ENCODE measurements at regions of chr16 and their contacts with region 1.

Region 1: GRCh38 chr16:70523076-70523742 is at the start of gene COG4:
- DNase-seq: peak; percentile 96
- ATAC-seq: peak; percentile 79
- H3K4me3 Mint-ChIP-seq: peak within 1 kb of the TSS; percentile 96
- H3K27ac Mint-ChIP-seq: peak within 1 kb of the TSS; percentile 98
- H3K4me1 Mint-ChIP-seq: peaks cover 46% of the 10 kb centered on the region
- H3K27me3 Mint-ChIP-seq: no peaks in the 10 kb centered on the region
- total RNA-seq, gene COG4: 33.5 to 37.6 TPM

Region 2: GRCh38 chr16:69371564-69371963 is 1151.6 kb before region 1 on chr16:
- CTCF ChIA-PET with region 1: no interaction called
- POLR2A ChIA-PET with region 1: no interaction called
- intact Hi-C with region 1: no loop called
- DNase-seq: no peak
- ATAC-seq: no peak
- H3K4me3 Mint-ChIP-seq: no peak overlapping the region
- H3K27ac Mint-ChIP-seq: no peak overlapping the region
- H3K4me1 Mint-ChIP-seq: peaks cover 12% of the 10 kb centered on the region
- H3K27me3 Mint-ChIP-seq: no peaks in the 10 kb centered on the region

Region 3: DNA sequence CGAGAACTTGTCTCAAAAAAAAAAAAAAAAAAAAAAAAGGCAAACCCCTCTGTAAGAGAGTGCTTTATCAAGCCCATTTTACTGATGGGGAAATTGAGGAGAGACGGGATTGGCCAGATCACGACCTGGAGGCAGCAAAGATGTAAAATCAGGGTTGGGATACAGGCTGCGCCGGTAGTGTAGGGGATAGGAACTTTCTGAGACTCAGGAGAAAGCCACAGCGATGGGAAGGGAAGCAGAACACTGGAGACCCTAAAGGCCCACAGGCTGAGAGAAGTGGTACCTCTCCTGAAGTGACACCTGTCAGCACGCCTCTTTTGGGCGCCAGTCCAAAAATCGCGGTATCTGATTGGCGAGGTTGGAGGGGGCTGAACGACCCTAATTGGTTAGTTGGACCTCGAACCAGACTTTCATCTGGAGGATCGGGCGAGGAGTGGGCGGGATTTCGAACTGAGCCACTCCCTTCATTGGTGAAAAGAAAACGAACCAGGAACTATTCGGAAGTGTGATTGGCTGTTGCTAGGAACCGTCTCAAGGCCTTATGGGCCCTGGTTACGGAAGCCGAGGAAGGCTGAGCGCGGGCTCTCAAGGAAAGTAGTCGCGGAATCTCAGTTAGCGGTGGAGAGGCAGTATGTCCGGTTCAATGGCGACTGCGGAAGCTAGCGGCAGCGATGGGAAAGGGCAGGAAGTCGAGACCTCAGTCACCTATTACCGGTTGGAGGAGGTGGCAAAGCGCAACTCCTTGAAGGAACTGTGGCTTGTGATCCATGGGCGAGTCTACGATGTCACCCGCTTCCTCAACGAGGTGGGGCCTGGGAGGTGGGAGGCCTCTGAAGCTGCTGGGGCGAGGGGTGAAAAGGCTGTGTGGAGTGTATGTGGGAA is 1098.9 kb before region 1 on chr16 and contains the start of gene CYB5B:
- CTCF ChIA-PET with region 1: no interaction called
- POLR2A ChIA-PET with region 1: no interaction called
- intact Hi-C with region 1: loop called in 1 of 2 experiments (anchors 10 kb)
- DNase-seq: peak; percentile 98
- ATAC-seq: peak; percentile 97
- H3K4me3 Mint-ChIP-seq: peak within 1 kb of the TSS; percentile 96
- H3K27ac Mint-ChIP-seq: peak within 1 kb of the TSS; percentile 93
- H3K4me1 Mint-ChIP-seq: peaks cover 35% of the 10 kb centered on the region
- H3K27me3 Mint-ChIP-seq: no peaks in the 10 kb centered on the region
- total RNA-seq, gene CYB5B: 158 to 187 TPM

Region 4: DNA sequence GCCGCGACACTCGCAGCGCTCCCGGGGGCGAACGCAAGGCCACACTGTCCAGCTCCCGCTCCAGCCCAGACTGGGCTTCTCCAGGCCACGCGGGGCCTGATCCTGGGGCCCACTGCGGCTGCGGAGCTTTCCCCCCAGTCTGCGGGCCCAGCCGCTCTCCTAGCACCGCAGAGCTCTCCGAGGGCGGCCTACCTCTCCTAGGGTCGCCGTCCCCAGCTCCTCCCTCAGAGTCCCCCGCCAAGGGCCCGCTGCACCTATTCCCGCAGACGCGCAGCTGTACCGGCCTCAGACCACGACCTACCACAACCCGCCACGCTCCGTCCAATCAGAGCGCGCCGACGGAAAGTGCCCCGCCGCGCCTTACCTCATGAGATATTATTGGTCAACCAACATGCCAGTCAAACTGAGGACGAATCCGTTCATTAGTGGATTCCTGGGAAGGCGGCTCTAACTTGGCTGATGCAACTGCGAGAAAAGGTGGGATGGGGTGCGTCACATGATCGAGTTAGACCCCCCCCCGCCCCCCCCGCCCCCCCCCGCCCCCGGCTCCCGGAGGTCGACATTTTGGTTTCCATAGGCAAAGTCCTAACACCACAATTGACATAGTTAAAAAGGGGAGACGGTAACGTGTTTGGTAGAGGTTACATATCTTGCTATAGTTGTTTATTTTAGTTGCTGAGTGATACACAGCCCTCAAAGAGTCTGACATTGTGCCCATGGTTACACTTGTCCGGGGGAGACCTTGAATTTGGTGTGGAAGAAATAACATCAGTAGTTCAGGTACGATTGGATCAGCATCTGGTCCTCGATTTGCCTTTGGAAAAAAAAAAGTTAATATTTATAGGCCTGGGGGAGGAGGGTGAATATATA is 233.7 kb before region 1 on chr16 and contains the start of gene AARS1:
- CTCF ChIA-PET with region 1: interaction called, 4 read pairs
- POLR2A ChIA-PET with region 1: interaction called, 9 read pairs
- intact Hi-C with region 1: loop called (anchors 1 to 2 kb)
- DNase-seq: peak; percentile 96
- ATAC-seq: peak; percentile 99
- H3K4me3 Mint-ChIP-seq: peak within 1 kb of the TSS; percentile 92
- H3K27ac Mint-ChIP-seq: peak within 1 kb of the TSS; percentile 96
- H3K4me1 Mint-ChIP-seq: peaks cover 37% of the 10 kb centered on the region
- H3K27me3 Mint-ChIP-seq: no peaks in the 10 kb centered on the region
- total RNA-seq, gene AARS1: 180 to 189 TPM

Region 5: DNA sequence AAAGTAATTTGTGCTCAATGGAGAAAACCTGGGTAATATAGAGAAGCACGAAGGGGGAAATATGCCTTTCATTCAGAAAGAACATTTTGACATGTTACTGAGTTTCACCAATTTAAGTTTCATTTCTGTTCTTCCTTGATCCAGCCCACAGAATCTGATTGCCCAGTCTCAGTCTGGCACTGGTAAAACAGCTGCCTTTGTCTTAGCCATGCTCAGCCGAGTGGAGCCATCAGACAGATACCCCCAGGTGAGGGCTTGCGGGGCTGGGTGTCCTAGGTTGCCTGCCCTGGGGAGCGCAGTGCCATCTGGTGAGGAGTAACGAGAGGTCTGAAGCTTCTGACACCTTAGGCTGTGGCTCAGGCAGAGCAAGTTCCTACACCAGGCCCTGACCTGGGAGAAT is 158.8 kb before region 1 on chr16:
- CTCF ChIA-PET with region 1: no interaction called
- POLR2A ChIA-PET with region 1: interaction called, 14 read pairs
- intact Hi-C with region 1: no loop called
- DNase-seq: peak; percentile 8
- ATAC-seq: peak; percentile 30
- H3K4me3 Mint-ChIP-seq: no peak overlapping the region
- H3K27ac Mint-ChIP-seq: peak overlapping the region; percentile 55
- H3K4me1 Mint-ChIP-seq: no peaks in the 10 kb centered on the region
- H3K27me3 Mint-ChIP-seq: no peaks in the 10 kb centered on the region

Region 6: GRCh38 chr16:70438969-70439862 is 84.0 kb before region 1 on chr16 and contains the start of gene ST3GAL2:
- CTCF ChIA-PET with region 1: no interaction called
- POLR2A ChIA-PET with region 1: no interaction called
- intact Hi-C with region 1: loop called (anchors 1 kb)
- DNase-seq: peak; percentile 97
- ATAC-seq: peak; percentile 97
- H3K4me3 Mint-ChIP-seq: peak within 1 kb of the TSS; percentile 96
- H3K27ac Mint-ChIP-seq: peak within 1 kb of the TSS; percentile 89
- H3K4me1 Mint-ChIP-seq: peaks cover 33% of the 10 kb centered on the region
- H3K27me3 Mint-ChIP-seq: no peaks in the 10 kb centered on the region
- total RNA-seq, gene ST3GAL2: 14.8 to 16.6 TPM

Region 7: DNA sequence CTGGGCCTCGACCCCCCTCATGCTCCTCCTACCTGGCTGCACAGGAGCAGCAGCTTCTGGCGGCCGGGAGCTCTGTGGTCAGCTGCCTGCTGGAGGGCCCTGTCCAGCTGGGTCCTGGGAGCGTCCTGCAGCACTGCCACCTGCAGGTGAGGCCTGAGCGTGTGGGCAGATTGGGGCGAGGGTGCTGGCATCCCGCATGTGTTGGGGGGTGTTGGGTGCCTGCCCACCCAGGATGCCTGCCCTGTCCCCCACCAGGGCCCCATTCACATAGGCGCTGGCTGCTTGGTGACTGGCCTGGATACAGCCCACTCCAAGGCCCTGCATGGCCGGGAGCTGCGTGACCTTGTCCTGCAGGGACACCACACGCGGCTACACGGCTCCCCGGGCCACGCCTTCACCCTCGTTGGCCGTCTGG is 52.3 kb before region 1 on chr16:
- CTCF ChIA-PET with region 1: no interaction called
- POLR2A ChIA-PET with region 1: interaction called, 6 read pairs
- intact Hi-C with region 1: loop called (anchors 1 to 2 kb)
- DNase-seq: no peak
- ATAC-seq: no peak
- H3K4me3 Mint-ChIP-seq: no peak overlapping the region
- H3K27ac Mint-ChIP-seq: no peak overlapping the region
- H3K4me1 Mint-ChIP-seq: peaks cover 4% of the 10 kb centered on the region
- H3K27me3 Mint-ChIP-seq: no peaks in the 10 kb centered on the region

Region 8: DNA sequence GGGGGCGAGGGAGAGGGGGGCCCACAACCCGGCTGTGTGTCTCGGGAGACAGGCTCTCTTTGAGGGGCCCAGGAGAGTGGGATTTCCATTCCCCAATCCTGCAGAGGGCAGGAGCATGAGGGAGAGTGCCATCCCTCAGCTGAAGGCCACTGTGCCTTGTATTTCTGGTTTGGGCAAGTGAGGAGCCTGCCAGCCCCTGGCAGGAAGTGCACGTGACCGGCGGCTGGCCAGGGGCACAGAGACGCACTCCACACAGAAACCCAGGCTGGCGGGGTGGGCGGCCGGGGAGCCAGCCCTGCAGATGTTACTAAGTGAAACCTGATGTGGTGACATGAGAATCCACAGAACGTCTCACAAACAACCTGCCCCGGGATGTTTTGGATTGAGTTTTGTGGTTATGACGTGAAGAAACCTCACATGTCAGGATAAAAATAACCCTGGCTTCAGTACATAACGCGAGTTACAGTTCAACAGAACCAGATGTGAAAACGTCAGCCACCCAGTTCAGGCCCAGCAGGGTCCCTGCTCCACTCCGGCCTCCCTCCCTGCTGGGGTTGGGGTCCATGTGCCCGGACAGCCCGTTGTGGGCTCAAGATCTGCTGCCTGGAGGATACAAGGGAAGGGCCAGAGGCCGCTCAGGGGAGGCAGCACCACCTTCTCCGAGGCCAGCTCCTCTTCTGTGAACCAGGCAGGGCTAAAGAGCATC is 214.3 kb after region 1 on chr16:
- CTCF ChIA-PET with region 1: no interaction called
- POLR2A ChIA-PET with region 1: interaction called, 3 read pairs
- intact Hi-C with region 1: loop called in 1 of 2 experiments (anchors 5 kb)
- DNase-seq: peak; percentile 91
- ATAC-seq: peak; percentile 88
- H3K4me3 Mint-ChIP-seq: peak overlapping the region; percentile 55
- H3K27ac Mint-ChIP-seq: peak overlapping the region; percentile 97
- H3K4me1 Mint-ChIP-seq: peaks cover 60% of the 10 kb centered on the region
- H3K27me3 Mint-ChIP-seq: no peaks in the 10 kb centered on the region